Right ventricle myocardium superior (tissue), 1 donor: ENCODE measurements at regions of chr6 and their contacts with region 1.

Region 1: GRCh38 chr6:29705389-29706231 is 17.6 kb upstream of the HLA-F start:
- DNase-seq: no peak
- ATAC-seq: peak; percentile 65

Region 2: GRCh38 chr6:29649701-29650673 is 55.6 kb before region 1 on chr6:
- intact Hi-C with region 1: no loop called
- DNase-seq: peak; percentile 98
- ATAC-seq: peak; percentile 97

Region 3: GRCh38 chr6:29752451-29753308 is 47.1 kb after region 1 on chr6:
- intact Hi-C with region 1: loop called (anchors 10 kb)
- DNase-seq: peak; percentile 95
- ATAC-seq: peak; percentile 87

Region 4: GRCh38 chr6:29834564-29835436 is 129.2 kb after region 1 on chr6:
- intact Hi-C with region 1: loop called (anchors 2 kb)
- DNase-seq: peak; percentile 56
- ATAC-seq: peak; percentile 72

Region 5: GRCh38 chr6:30013291-30013922 is 307.8 kb after region 1 on chr6:
- intact Hi-C with region 1: loop called (anchors 10 kb)
- DNase-seq: no peak
- ATAC-seq: peak; percentile 65